ENCODE measurements at regions of chr2 and their contacts with region 1.

Region 1: DNA sequence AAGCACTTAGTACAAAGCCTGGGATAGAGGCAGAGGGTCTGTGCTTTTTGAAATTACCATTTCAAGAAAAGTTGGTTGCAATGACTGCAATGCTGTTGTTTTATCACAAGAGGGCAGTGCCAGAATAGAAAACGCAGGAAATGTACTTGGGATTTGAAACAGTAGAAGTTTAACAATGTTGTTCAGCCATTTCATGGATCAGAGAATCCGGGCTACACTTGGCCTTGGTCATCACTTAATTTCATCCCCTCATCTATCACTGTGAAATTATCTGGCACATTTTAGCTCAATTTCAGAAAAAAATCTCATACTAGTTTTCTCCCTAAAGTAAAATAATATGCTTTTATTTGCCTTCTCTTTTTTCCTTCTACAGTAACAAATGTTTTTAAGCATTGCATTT is 70.8 kb downstream of the RAPGEF4 start:
- DNase-seq: no peak
- H3K4me3 ChIP-seq: no peak overlapping the region
- H3K27ac ChIP-seq: no peak overlapping the region
- H3K4me1 ChIP-seq: no peaks in the 10 kb centered on the region
- H3K27me3 ChIP-seq: no peaks in the 10 kb centered on the region
- CTCF ChIP-seq: peak in 2 of 3 experiments; percentile 67 to 86; a peak in 3 of 4 replicates
- EP300 ChIP-seq: no peak
- POLR2A ChIP-seq: no peak
- RAD21 ChIP-seq: peak; percentile 91 to 93

Region 2: GRCh38 chr2:172783091-172783898 is 23.2 kb before region 1 on chr2:
- CTCF ChIA-PET with region 1: interaction called, 11 read pairs
- POLR2A ChIA-PET with region 1: no interaction called
- DNase-seq: no peak
- H3K4me3 ChIP-seq: no peak overlapping the region
- H3K27ac ChIP-seq: no peak overlapping the region
- H3K4me1 ChIP-seq: no peaks in the 10 kb centered on the region
- H3K27me3 ChIP-seq: no peaks in the 10 kb centered on the region
- CTCF ChIP-seq: peak in 1 of 3 experiments; percentile 21; a peak in 1 of 4 replicates
- EP300 ChIP-seq: no peak
- POLR2A ChIP-seq: no peak
- RAD21 ChIP-seq: no peak

Region 3: GRCh38 chr2:172790404-172790803 is 16.1 kb before region 1 on chr2:
- CTCF ChIA-PET with region 1: interaction called, 12 read pairs
- POLR2A ChIA-PET with region 1: no interaction called
- DNase-seq: no peak
- H3K4me3 ChIP-seq: no peak overlapping the region
- H3K27ac ChIP-seq: no peak overlapping the region
- H3K4me1 ChIP-seq: no peaks in the 10 kb centered on the region
- H3K27me3 ChIP-seq: no peaks in the 10 kb centered on the region
- CTCF ChIP-seq: no peak
- EP300 ChIP-seq: no peak
- POLR2A ChIP-seq: no peak
- RAD21 ChIP-seq: no peak

Measured in H1 (cell line).